Sciatic nerve (tissue), 2 donors: ENCODE measurements at regions of chr9 and their contacts with region 1.

Region 1: GRCh38 chr9:11182001-11182400 is 569.2 kb upstream of the PTPRD start:
- DNase-seq: no peak
- ATAC-seq: no peak

Region 2: DNA sequence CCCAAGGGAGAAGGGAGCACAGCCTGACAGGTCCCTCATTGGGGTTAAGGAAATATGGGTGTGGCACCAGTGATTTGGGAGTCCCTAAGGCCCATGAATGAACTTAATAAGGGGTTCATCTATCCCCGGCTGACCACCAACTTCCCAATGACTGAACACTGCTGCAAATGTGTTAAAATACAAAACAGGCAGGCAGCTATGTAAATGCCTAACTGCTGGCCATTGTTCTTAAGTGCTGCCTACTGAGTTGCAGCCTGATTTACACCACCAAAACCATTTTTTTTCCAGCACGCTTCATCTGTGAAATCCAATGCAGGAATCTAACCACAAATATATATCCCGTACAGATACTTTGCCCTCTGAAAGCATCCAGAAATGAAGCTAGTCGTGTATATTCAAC is 1047.7 kb before region 1 on chr9:
- intact Hi-C with region 1: no loop called
- DNase-seq: no peak
- ATAC-seq: no peak

Region 3: GRCh38 chr9:11595756-11596155 is 413.8 kb after region 1 on chr9:
- intact Hi-C with region 1: loop called (anchors 10 kb)
- DNase-seq: no peak
- ATAC-seq: no peak

Region 4: GRCh38 chr9:11992866-11993265 is 810.9 kb after region 1 on chr9:
- intact Hi-C with region 1: no loop called
- DNase-seq: no peak
- ATAC-seq: no peak